OCI-LY7 (cell line): ENCODE measurements at regions of chr3 and their contacts with region 1.

Region 1: DNA sequence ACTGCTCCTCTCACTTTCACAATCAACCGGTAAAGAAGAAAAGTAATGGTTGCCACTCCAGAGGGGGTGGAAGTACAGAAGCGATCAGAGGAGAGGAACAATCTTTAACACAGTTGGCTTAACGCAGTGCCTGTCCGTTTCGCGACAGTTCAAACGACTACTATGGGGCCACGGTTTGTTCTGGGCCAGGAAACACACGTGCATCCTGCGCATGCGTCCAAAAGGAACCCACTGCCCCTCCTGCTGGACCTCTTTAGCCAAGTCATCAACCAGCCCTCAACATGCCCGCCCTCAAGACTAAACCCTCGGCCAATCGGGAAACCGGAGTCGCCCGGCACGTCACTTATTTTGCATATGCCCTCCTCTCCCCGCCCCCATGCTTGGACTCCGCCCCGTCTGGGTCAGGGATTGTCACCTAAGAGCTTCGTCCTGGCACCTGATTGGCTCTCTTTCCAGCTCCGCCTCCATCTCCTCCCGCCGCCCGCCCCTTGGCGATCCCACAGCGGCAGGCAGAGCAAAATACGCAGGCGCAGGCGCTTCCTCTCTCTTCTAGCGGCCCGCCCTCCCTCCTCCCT is 345 bp upstream of the CDV3 start:
- DNase-seq: peak; percentile 100
- H3K4me3 ChIP-seq: peak overlapping the region; percentile 87
- H3K27ac ChIP-seq: peak overlapping the region; percentile 98
- H3K4me1 ChIP-seq: peaks cover 68% of the 10 kb centered on the region
- CTCF ChIP-seq: no peak; the same call in 1 of the 2 replicates

Region 2: GRCh38 chr3:133457465-133458067 is 115.6 kb before region 1 on chr3:
- CTCF ChIA-PET with region 1: interaction called, 4 read pairs
- POLR2A ChIA-PET with region 1: interaction called, 73 read pairs
- intact Hi-C with region 1: no loop called
- DNase-seq: peak; percentile 64
- H3K4me3 ChIP-seq: no peak overlapping the region
- H3K27ac ChIP-seq: no peak overlapping the region
- H3K4me1 ChIP-seq: peaks cover 28% of the 10 kb centered on the region
- CTCF ChIP-seq: peak; percentile 87

Region 3: GRCh38 chr3:133475245-133476010 is 97.7 kb before region 1 on chr3:
- CTCF ChIA-PET with region 1: interaction called, 9 read pairs
- POLR2A ChIA-PET with region 1: interaction called, 51 read pairs
- intact Hi-C with region 1: loop called (anchors 1 kb)
- DNase-seq: peak; percentile 95
- H3K4me3 ChIP-seq: peak overlapping the region; percentile 57
- H3K27ac ChIP-seq: peak overlapping the region; percentile 98
- H3K4me1 ChIP-seq: peaks cover 98% of the 10 kb centered on the region
- CTCF ChIP-seq: no peak

Region 4: GRCh38 chr3:133547432-133548041 is 25.6 kb before region 1 on chr3:
- CTCF ChIA-PET with region 1: interaction called, 3 read pairs
- POLR2A ChIA-PET with region 1: interaction called, 20 read pairs
- intact Hi-C with region 1: no loop called
- DNase-seq: no peak
- H3K4me3 ChIP-seq: no peak overlapping the region
- H3K27ac ChIP-seq: no peak overlapping the region
- H3K4me1 ChIP-seq: peaks cover 44% of the 10 kb centered on the region
- CTCF ChIP-seq: no peak